Activated CD4-positive, alpha-beta T cell treated with anti-CD3 and anti-CD28 coated beads, Interleukin-2, amount 10 ng/mL, durations not matched to agents 24 days and 14 days (primary cell): ENCODE measurements at regions of chr6 and their contacts with region 1.

Region 1: GRCh38 chr6:104682722-104683643 is 176.7 kb downstream of the HACE1 start:
- DNase-seq: peak; percentile 91
- H3K4me3 Mint-ChIP-seq: no peak overlapping the region
- H3K27ac Mint-ChIP-seq: no peak overlapping the region
- H3K4me1 Mint-ChIP-seq: peaks cover 10% of the 10 kb centered on the region
- H3K27me3 Mint-ChIP-seq: no peaks in the 10 kb centered on the region

Region 2: GRCh38 chr6:104483225-104483834 is 199.7 kb before region 1 on chr6:
- intact Hi-C with region 1: no loop called
- DNase-seq: no peak
- H3K4me3 Mint-ChIP-seq: no peak overlapping the region
- H3K27ac Mint-ChIP-seq: no peak overlapping the region
- H3K4me1 Mint-ChIP-seq: no peaks in the 10 kb centered on the region
- H3K27me3 Mint-ChIP-seq: no peaks in the 10 kb centered on the region

Region 3: DNA sequence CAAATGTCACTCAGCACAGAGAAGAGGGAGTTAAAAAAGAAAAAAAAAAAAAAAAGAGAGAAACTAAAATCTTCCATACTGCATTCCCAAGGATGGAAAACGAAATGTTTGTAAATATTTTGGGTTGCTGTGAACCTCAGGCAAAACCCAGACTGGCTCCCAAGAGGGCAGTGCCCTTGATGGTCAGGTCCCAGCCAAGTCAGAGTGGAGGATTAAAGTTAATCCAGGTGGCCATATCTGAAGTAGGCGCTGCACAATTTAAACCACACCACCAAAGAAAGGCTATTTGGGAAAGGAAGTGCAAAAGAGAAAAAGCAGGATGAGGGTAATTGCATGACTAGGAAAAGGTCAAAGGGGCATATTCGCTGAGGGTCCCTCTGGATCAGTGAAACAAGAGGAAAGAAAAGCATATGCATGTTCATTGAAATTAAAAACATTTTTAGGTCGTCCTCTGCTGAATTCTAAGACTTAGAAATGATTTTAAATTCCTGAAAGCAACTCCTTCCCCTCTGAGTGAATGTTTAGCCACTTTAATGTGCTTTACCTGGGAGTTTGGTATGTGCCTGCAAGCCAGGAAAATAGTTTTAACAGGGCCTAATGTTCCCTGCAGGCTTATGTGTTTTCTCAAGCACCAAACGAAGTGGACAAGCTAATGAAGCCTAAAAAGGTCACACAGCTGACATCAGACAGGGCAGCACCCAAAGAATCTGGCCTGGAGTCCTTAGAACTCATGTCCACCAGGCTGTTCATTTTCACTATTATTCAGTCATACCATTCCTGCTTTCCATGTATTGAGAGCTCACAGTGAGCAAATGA is 17.6 kb after region 1 on chr6:
- intact Hi-C with region 1: no loop called
- DNase-seq: no peak
- H3K4me3 Mint-ChIP-seq: no peak overlapping the region
- H3K27ac Mint-ChIP-seq: no peak overlapping the region
- H3K4me1 Mint-ChIP-seq: peaks cover 23% of the 10 kb centered on the region
- H3K27me3 Mint-ChIP-seq: no peaks in the 10 kb centered on the region

Region 4: GRCh38 chr6:104771258-104771832 is 88.4 kb after region 1 on chr6:
- intact Hi-C with region 1: loop called (anchors 1 kb)
- DNase-seq: no peak
- H3K4me3 Mint-ChIP-seq: no peak overlapping the region
- H3K27ac Mint-ChIP-seq: no peak overlapping the region
- H3K4me1 Mint-ChIP-seq: peaks cover 8% of the 10 kb centered on the region
- H3K27me3 Mint-ChIP-seq: no peaks in the 10 kb centered on the region

Region 5: DNA sequence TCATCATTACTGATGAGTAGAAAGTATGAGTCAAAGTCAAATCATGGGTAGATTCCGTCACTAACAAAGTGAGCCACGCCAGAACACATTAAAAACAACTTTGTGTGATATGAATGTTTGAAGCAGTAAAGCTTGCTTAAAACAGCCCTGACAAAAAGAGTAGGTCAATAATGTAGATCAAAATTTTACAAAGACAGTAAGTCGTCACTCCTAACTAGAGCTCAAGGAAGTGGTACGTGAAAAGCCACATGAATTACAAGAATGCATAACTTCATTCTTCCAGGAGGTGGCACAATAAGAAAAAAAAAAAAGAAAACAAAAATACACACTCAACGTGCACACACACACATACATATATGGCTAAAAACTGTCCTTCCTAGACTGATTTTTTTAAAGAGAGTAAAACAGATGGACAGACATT is 106.8 kb after region 1 on chr6:
- intact Hi-C with region 1: loop called (anchors 5 kb)
- DNase-seq: peak; percentile 66
- H3K4me3 Mint-ChIP-seq: peak overlapping the region; percentile 72
- H3K27ac Mint-ChIP-seq: peak overlapping the region; percentile 97
- H3K4me1 Mint-ChIP-seq: peaks cover 32% of the 10 kb centered on the region
- H3K27me3 Mint-ChIP-seq: no peaks in the 10 kb centered on the region

Region 6: GRCh38 chr6:104859225-104860146 is 176.5 kb after region 1 on chr6 and contains the start of gene HACE1:
- intact Hi-C with region 1: loop called (anchors 10 kb)
- DNase-seq: peak; percentile 97
- H3K4me3 Mint-ChIP-seq: peak within 1 kb of the TSS; percentile 98
- H3K27ac Mint-ChIP-seq: peak within 1 kb of the TSS; percentile 90
- H3K4me1 Mint-ChIP-seq: peaks cover 24% of the 10 kb centered on the region
- H3K27me3 Mint-ChIP-seq: no peaks in the 10 kb centered on the region
- total RNA-seq, gene HACE1: 18.6 and 21.3 TPM in 2 replicates